Sciatic nerve (tissue), 2 donors: ENCODE measurements at regions of chr19 and their contacts with region 1.

Region 1: GRCh38 chr19:34639491-34640085 is 37.4 kb downstream of the SCGB2B2 start:
- DNase-seq: peak; percentile 65
- ATAC-seq: peak; percentile 62

Region 2: DNA sequence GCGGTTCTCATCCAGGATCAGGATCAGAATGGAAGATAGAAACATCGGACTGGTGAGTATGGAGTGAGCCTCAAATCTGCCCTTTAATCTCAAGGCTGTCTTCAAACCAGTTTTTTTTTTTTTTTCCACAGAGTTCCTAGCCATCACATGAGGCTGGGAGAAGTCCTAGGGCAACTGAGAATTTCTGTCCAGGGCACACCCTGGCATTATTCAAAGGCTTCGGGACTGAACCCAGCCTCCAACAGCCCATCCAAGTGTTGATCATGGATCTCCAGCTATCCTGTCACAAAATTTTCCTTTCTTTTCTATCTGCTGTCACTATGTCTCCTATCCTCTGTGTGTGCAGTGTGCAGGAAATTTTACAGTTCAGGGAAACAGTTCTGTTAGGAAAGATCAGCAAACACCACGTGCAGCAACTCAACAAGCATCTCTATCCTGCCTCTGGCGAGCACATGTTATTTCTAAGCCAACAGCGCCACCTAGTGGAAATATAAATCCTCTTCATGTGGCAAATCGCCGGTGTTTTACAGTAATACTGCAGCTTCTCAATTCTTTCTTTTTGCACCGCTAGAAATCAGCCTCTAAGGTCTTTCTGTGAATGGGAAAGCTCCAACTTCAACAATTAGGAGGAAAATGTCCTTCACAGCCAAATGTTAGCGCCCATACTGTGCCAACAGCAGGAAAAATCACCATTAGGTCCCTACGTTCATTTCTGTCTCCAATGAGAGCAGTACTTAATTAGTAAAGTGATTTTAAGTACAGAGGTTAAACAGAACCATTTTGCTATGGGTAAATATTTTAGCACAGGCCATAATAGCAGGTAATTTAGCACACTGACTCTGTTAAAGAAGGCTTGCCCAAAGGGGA is 73.0 kb after region 1 on chr19:
- intact Hi-C with region 1: loop called (anchors 5 kb)
- DNase-seq: no peak
- ATAC-seq: peak; percentile 59

Region 3: GRCh38 chr19:36514012-36514612 is 1874.5 kb after region 1 on chr19:
- intact Hi-C with region 1: no loop called
- DNase-seq: no peak
- ATAC-seq: no peak